Common myeloid progenitor, CD34-positive (primary cell): ENCODE measurements at regions of chr12 and their contacts with region 1.

Region 1: DNA sequence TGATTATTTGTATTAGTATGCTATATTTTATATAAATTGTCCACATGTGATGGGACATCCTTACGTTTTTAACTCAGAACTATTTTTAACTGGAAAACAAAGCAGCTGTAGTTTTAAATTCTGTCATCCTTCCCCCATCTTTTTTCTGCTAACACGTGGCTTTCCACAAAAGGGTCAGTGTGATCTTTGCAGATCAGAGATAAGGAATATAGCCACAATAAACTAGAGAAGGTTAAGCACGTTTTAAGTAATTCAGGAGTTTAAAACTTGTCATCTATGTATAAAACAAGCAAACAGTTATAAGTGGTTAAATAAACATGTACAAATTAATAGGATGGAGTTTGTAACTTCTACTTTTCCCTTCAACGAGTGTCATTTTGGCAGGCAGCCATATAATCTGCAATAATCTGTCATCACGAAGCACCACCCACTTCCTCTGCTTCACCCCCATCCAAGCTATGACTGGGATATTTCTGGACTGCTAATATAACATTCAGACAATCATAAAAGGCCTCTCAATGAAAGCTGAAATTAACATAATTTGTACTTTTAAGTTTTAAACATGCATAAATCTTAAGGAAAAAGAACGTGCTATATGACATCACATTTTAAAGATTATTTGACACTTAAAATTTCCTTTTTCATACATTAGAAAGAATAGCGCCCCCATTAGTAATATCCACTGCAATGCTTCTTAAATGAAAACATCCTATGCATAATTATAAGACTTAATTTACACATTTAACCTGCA is 15.3 kb downstream of the TAOK3 start:
- DNase-seq: peak; percentile 92 to 97 (median 95)
- H3K4me3 ChIP-seq: peak overlapping the region in 6 of 7 experiments; percentile 43 to 84 (median 68)
- H3K27ac ChIP-seq: peak overlapping the region; percentile 55 to 88
- H3K4me1 ChIP-seq: peaks cover 34 to 77% (median 48%) of the 10 kb centered on the region in 4 experiments
- H3K27me3 ChIP-seq: no peaks in the 10 kb centered on the region

Region 2: GRCh38 chr12:118302066-118302465 is 55.4 kb before region 1 on chr12:
- CTCF ChIA-PET with region 1: interaction called, 10 read pairs
- POLR2A ChIA-PET with region 1: interaction called, 3 read pairs
- DNase-seq: no peak
- H3K4me3 ChIP-seq: peak overlapping the region in 1 of 7 experiments; percentile 1
- H3K27ac ChIP-seq: no peak overlapping the region
- H3K4me1 ChIP-seq: peaks cover 18 to 53% (median 35%) of the 10 kb centered on the region in 4 experiments
- H3K27me3 ChIP-seq: no peaks in the 10 kb centered on the region

Region 3: DNA sequence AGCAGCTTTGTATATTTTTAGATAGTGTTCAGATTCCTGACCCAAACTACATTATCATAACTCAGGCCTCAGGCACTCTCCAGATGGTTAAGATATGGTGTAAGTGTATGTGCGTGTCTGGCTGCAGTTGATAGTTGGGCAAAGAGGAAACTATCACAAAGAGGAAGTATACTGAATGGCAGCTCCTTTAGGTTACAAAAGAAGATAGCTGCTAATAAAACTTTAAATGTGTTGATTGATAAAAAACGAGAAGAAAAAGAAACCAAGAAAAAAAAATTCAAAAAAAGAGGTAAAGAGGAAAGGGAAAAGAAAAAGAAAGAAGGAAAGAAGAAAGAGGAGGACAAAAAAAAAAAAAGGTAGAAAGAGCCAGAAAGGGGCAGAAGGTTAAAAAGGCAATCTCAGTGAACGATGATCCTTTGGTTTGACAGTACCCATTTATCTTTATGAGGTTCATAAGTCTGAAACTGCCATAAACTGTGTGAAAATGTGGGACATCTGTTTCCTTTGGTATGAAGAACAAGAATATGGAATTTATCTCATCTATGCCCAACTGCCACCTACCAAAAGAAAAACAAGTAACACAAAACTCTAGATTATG is 26.9 kb before region 1 on chr12:
- CTCF ChIA-PET with region 1: interaction called, 18 read pairs
- POLR2A ChIA-PET with region 1: interaction called, 4 read pairs
- DNase-seq: peak; percentile 93 to 99 (median 98)
- H3K4me3 ChIP-seq: peak overlapping the region in 2 of 7 experiments; percentile 50 to 55
- H3K27ac ChIP-seq: peak overlapping the region; percentile 80 to 88
- H3K4me1 ChIP-seq: peaks cover 21 to 81% (median 65%) of the 10 kb centered on the region in 4 experiments
- H3K27me3 ChIP-seq: no peaks in the 10 kb centered on the region

Region 4: DNA sequence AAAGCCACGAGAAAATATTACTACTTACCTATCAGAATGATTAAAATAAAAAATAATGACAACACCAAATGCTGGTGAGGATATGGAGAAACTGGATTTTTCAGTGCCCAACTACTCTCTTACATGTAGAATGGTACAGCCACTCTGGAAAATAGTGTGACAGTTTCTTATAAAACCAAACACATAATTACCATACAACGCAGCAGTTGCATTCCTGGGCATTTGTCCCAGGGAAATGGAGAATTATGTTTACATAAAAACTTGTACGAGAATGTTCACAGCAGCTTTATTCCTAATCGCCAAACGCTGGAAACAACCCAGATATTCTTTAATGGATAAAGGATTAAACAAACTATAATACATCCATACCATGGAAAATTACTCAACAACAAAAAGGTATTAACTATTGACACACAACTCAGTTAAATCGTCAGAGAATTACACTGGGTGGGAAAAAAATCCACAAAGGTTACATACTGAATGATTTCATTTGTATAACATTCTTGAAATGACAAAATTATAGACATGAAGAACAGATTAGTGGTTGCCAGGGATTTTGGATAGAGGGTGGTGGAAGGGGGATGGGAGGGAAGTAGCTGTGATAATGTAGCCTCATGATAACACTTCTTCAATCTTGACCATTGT is 20.1 kb before region 1 on chr12:
- CTCF ChIA-PET with region 1: interaction called, 65 read pairs
- POLR2A ChIA-PET with region 1: interaction called, 3 read pairs
- DNase-seq: no peak
- H3K4me3 ChIP-seq: no peak overlapping the region
- H3K27ac ChIP-seq: no peak overlapping the region
- H3K4me1 ChIP-seq: peaks cover 4 to 54% (median 31%) of the 10 kb centered on the region in 4 experiments
- H3K27me3 ChIP-seq: no peaks in the 10 kb centered on the region

Region 5: DNA sequence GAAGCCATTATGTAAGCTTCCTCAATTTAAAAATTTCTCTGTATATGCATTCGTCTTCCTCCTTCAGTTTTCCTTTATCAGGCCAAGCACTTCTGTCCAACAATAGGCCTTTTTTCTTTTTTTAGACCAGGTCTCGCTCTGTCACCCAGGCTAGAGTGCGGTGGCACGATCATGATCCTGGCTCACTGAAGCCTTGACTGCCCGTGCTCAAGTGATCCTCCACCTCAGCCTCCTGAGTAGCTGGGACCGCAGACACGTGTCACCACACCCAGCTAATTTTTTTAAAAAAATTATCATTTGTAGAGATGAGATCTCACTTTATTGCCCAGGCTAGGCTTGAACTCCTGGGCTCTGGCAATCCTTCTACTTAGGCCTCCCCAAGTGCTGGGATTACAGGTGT is 10.5 kb before region 1 on chr12:
- CTCF ChIA-PET with region 1: interaction called, 65 read pairs
- POLR2A ChIA-PET with region 1: no interaction called
- DNase-seq: peak in 2 of 3 donors; percentile 71 to 85
- H3K4me3 ChIP-seq: peak overlapping the region in 3 of 7 experiments; percentile 35 to 48 (median 41)
- H3K27ac ChIP-seq: peak overlapping the region; percentile 27 to 71
- H3K4me1 ChIP-seq: peaks cover 23 to 67% (median 36%) of the 10 kb centered on the region in 4 experiments
- H3K27me3 ChIP-seq: no peaks in the 10 kb centered on the region

Region 6: DNA sequence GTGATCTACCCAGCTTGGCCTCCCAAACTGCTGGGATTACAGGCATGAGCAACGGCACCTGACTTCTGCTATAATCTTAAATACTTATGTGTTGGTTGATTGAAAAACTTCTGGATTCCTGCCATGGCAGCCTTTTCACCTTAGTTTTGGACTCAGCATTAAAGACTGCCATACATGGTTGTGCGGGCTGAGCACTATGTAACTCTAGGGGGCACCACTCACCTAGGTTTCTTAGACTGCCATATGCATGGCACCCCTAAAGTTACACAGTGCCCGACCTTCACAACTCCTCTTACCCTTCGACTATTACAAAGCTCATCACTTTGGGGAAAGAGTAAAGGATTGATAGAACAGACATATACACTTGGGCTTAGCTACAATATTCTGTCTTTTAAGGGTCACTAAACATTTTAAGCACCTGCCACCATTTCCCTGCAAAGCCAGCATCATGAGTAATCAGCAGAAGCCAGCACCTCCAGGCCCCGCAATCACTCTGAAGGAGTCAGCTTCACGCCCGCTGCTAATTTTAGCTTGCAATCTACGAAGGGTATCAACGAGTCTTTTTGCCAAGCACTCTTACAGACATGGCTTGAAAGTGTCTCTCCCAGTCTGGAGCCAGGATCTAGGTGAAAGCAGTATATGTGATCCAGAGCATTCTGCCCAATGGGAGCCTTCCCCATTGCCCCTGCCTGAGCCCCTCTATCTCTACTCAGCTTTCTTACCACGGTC is 78.7 kb after region 1 on chr12:
- CTCF ChIA-PET with region 1: no interaction called
- POLR2A ChIA-PET with region 1: no interaction called
- DNase-seq: peak in 1 of 3 donors; percentile 4
- H3K4me3 ChIP-seq: no peak overlapping the region
- H3K27ac ChIP-seq: no peak overlapping the region
- H3K4me1 ChIP-seq: no peaks in the 10 kb centered on the region
- H3K27me3 ChIP-seq: peaks cover 0 to 3% (median 0%) of the 10 kb centered on the region in 5 experiments